ENCODE measurements at regions of chr1 and their contacts with region 1.

Region 1: GRCh38 chr1:248858891-248859889 is at the start of gene ZNF692:
- DNase-seq: peak; percentile 98
- CTCF ChIP-seq: no peak

Region 2: GRCh38 chr1:248825909-248826760 is 33.1 kb before region 1 on chr1 and contains the start of gene SH3BP5L:
- CTCF ChIA-PET with region 1: interaction called, 48 read pairs
- POLR2A ChIA-PET with region 1: interaction called, 3 read pairs
- DNase-seq: peak; percentile 95
- CTCF ChIP-seq: peak; percentile 64

Region 3: DNA sequence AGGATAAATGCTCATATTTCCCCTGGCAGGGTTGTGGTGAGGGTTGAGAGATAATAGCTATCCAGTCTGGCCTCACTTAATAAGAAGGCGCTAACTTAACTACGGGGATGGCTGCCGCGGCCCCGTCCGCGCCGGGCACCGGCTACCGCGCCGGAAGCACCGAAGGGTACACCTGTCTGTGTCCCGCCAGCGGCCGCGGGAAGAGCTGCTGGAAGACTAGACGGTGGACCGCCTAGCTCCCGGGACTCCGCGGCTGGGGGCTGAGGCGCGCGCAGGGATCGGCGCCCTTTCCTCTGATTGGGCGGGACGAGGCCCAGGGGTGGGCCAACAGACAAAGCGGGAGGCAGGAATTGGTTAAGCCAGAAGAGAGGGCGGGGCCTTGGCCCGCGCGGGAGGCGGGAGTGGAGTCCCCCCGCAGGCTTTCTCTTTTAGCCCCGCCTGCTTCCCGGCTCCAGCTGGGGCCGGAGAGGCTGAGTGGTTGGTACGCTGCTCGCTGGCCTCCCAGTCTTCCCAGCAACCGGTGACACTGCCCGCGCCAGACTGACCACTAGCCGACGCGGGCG is 21.3 kb before region 1 on chr1 and contains the start of gene ZNF672:
- CTCF ChIA-PET with region 1: interaction called, 36 read pairs
- POLR2A ChIA-PET with region 1: interaction called, 9 read pairs
- DNase-seq: peak; percentile 96
- CTCF ChIP-seq: no peak

Region 4: GRCh38 chr1:248873409-248873992 is 14.3 kb after region 1 on chr1:
- CTCF ChIA-PET with region 1: interaction called, 10 read pairs
- POLR2A ChIA-PET with region 1: interaction called, 9 read pairs
- DNase-seq: peak; percentile 84
- CTCF ChIP-seq: no peak

Measured in GM10248 (cell line).